Aorta (tissue), 5 donors: ENCODE measurements at regions of chr10 and their contacts with region 1.

Region 1: GRCh38 chr10:4532467-4532866 is 293.5 kb upstream of the AKR1E2 start:
- DNase-seq: no peak
- ATAC-seq: peak; percentile 41
- H3K4me3 ChIP-seq: no peak overlapping the region
- H3K27ac ChIP-seq: no peak overlapping the region
- H3K4me1 ChIP-seq: no peaks in the 10 kb centered on the region
- H3K27me3 ChIP-seq: no peaks in the 10 kb centered on the region

Region 2: GRCh38 chr10:4498711-4499251 is 33.7 kb before region 1 on chr10:
- intact Hi-C with region 1: loop called in 1 of 2 experiments (anchors 5 kb)
- DNase-seq: no peak
- ATAC-seq: peak; percentile 72
- H3K4me3 ChIP-seq: no peak overlapping the region
- H3K27ac ChIP-seq: peak overlapping the region; percentile 78 to 94
- H3K4me1 ChIP-seq: peaks cover 0 to 2% of the 10 kb centered on the region in 2 donors
- H3K27me3 ChIP-seq: no peaks in the 10 kb centered on the region

Region 3: DNA sequence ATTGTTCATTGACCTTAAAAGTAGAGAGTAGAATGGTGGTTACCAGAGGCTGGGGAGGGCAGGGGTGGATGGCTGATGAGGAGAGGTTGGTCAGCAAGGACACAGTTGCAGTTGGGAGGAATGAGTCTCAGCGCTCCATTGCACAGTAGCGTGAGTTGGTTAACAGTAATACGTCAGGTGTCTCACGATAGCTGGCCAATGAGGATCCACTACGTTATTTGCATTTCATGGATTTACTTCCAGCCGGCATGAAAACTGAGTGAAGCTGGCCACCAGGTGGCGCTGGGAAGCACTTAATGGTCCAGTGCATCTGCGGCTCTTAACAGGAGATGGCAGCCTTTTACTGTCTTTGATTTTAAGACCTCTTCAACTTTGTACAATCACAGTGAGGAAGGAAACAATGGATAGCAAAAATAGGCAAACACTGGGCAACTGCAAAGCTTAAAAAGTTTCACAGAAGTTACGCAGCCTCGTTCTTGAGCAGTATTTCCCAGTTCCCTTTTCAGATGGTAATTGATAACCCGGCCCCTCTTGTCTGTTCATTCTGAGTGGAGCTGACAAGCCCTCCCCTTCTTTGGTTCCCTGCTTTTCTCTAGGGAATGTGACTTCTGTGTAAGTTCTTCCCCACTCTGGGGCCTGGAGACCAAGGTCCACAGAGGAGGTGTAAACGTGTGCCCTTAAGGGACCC is 317.2 kb after region 1 on chr10:
- intact Hi-C with region 1: no loop called
- DNase-seq: peak; percentile 93 to 98
- ATAC-seq: peak; percentile 92
- H3K4me3 ChIP-seq: no peak overlapping the region
- H3K27ac ChIP-seq: peak overlapping the region; percentile 20 to 52
- H3K4me1 ChIP-seq: no peaks in the 10 kb centered on the region
- H3K27me3 ChIP-seq: no peaks in the 10 kb centered on the region